OCI-LY7 (cell line): ENCODE measurements at regions of chr1 and their contacts with region 1.

Region 1: DNA sequence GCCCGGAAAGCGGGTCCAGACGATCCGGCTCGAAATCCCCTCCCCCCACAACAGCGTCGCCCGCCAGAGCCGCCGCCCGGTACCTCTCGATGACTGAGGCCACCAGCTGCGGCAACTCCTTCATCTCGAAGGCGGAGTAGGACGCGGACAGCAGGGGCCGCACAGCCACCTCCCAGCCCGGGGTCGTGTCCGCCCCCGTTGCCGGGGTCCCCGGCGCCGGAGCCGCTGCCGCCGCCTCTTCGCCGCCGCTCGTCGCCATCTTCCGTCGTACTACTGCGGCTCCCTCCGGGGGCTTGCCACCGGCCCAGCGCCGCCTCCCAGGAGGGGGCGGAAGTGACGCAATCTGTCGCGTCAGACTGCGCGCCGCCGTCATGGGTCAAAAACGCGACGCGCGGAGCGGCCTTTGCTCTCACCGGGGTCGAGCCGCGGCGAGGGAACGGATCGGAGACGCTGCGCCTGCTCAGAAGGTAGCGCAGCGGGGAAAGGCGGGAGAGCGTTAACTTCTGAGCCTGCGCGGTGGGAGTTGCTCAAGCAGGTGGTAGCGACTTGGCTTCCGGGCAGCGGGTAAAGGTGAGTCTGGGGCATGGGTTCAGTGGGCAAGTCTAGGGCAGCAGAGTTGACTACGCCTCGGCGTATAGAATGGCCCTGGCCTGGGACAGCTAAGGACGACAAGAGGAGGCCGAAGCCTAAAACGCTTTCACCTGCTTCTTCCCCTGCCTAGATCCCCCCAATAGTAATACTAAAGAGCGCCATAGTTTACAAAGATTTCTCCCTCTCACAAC is at the start of gene UBR4:
- DNase-seq: peak; percentile 97
- H3K4me3 ChIP-seq: peak within 1 kb of the TSS; percentile 92
- H3K27ac ChIP-seq: peak within 1 kb of the TSS; percentile 78
- H3K4me1 ChIP-seq: peaks cover 52% of the 10 kb centered on the region
- CTCF ChIP-seq: no peak
- total RNA-seq, gene UBR4: 92.9 and 121 TPM in 2 replicates

Region 2: GRCh38 chr1:19251305-19252196 is 41.4 kb after region 1 on chr1 and contains the starts of genes EMC1 and MRTO4:
- CTCF ChIA-PET with region 1: no interaction called
- POLR2A ChIA-PET with region 1: interaction called, 6 read pairs
- intact Hi-C with region 1: loop called (anchors 1 kb)
- DNase-seq: peak; percentile 88
- H3K4me3 ChIP-seq: peak within 1 kb of the TSS; percentile 99
- H3K27ac ChIP-seq: peak within 1 kb of the TSS; percentile 72
- H3K4me1 ChIP-seq: peaks cover 35% of the 10 kb centered on the region
- CTCF ChIP-seq: no peak
- total RNA-seq, gene EMC1: 35.2 and 41.3 TPM in 2 replicates
- total RNA-seq, gene MRTO4: 60.0 and 67.6 TPM in 2 replicates

Region 3: GRCh38 chr1:19398309-19398760 is 188.2 kb after region 1 on chr1:
- CTCF ChIA-PET with region 1: no interaction called
- POLR2A ChIA-PET with region 1: no interaction called
- intact Hi-C with region 1: no loop called
- DNase-seq: no peak
- H3K4me3 ChIP-seq: no peak overlapping the region
- H3K27ac ChIP-seq: no peak overlapping the region
- H3K4me1 ChIP-seq: peaks cover 14% of the 10 kb centered on the region
- CTCF ChIP-seq: no peak